Esophagus muscularis mucosa (tissue), 4 donors: ENCODE measurements at regions of chr16 and their contacts with region 1.

Region 1: GRCh38 chr16:20849587-20850390 is 43.5 kb downstream of the REXO5 start:
- DNase-seq: no peak
- H3K4me3 ChIP-seq: no peak overlapping the region
- H3K27ac ChIP-seq: peak overlapping the region; percentile 79 to 91 (median 85)
- H3K4me1 ChIP-seq: peaks cover 46 to 51% (median 49%) of the 10 kb centered on the region in 4 donors
- H3K27me3 ChIP-seq: no peaks in the 10 kb centered on the region
- CTCF ChIP-seq: peak in 2 of 3 experiments; percentile 98 to 99
- EP300 ChIP-seq: no peak
- POLR2A ChIP-seq: no peak

Region 2: GRCh38 chr16:20900299-20901067 is 50.7 kb after region 1 on chr16 and contains the starts of genes DCUN1D3 and LYRM1:
- intact Hi-C with region 1: loop called (anchors 1 kb)
- DNase-seq: peak; percentile 99
- H3K4me3 ChIP-seq: peak within 1 kb of the TSS; percentile 60 to 96 (median 76)
- H3K27ac ChIP-seq: peak within 1 kb of the TSS; percentile 93 to 99 (median 99)
- H3K4me1 ChIP-seq: peaks cover 67 to 84% (median 77%) of the 10 kb centered on the region in 4 donors
- H3K27me3 ChIP-seq: no peaks in the 10 kb centered on the region
- CTCF ChIP-seq: no peak
- EP300 ChIP-seq: peak; percentile 83
- POLR2A ChIP-seq: peak; percentile 88
- total RNA-seq, gene DCUN1D3: 18.3 to 37.4 (median 27.8) TPM
- total RNA-seq, gene LYRM1: 38.9 to 69.2 (median 46.4) TPM

Region 3: GRCh38 chr16:20944861-20945574 is 95.2 kb after region 1 on chr16:
- intact Hi-C with region 1: loop called (anchors 10 kb)
- DNase-seq: no peak
- H3K4me3 ChIP-seq: no peak overlapping the region
- H3K27ac ChIP-seq: no peak overlapping the region
- H3K4me1 ChIP-seq: no peaks in the 10 kb centered on the region
- H3K27me3 ChIP-seq: no peaks in the 10 kb centered on the region
- CTCF ChIP-seq: peak in 2 of 3 experiments; percentile 27 to 29
- EP300 ChIP-seq: no peak
- POLR2A ChIP-seq: no peak

Region 4: DNA sequence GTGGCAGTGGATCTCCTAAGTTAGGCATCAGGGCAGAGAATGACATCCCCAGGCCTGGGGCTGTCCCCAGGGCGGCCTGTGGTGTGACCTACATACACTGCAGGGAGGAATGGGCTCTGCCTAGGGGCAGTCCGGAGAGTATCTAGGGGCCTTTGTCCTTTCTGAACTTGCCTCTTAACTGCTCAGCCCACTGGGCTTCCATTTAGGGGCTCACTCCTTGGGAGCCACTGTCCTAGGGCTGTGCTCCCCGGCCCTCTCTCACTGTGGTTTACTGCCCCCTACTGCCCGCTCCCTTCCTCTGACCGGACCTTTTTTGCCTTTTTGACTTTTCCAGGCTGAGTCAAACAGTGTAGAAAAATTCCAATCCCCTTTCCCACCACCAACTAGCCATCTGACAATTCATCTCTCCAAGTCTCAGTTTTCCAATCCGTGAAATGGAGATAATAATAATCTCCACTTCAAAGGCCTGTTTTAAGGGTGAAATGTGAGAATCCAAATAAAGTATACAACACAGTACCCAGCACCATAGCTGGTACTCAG is 234.0 kb after region 1 on chr16:
- intact Hi-C with region 1: loop called (anchors 1 kb)
- DNase-seq: peak; percentile 91
- H3K4me3 ChIP-seq: no peak overlapping the region
- H3K27ac ChIP-seq: no peak overlapping the region
- H3K4me1 ChIP-seq: peaks cover 0 to 4% (median 0%) of the 10 kb centered on the region in 4 donors
- H3K27me3 ChIP-seq: no peaks in the 10 kb centered on the region
- CTCF ChIP-seq: peak; percentile 67 to 82 (median 77)
- EP300 ChIP-seq: no peak
- POLR2A ChIP-seq: no peak